ENCODE measurements at regions of chr3 and their contacts with region 1.

Region 1: GRCh38 chr3:127590593-127591477 is at the start of gene TPRA1:
- DNase-seq: peak; percentile 92 to 96 (median 95)
- H3K4me3 ChIP-seq: peak within 1 kb of the TSS; percentile 65 to 87 (median 87)
- H3K4me3 Mint-ChIP-seq: peak within 1 kb of the TSS; percentile 89 to 97
- H3K27ac ChIP-seq: peak within 1 kb of the TSS; percentile 99
- H3K27ac Mint-ChIP-seq: peak within 1 kb of the TSS; percentile 98 to 100 (median 99)
- H3K4me1 ChIP-seq: peaks cover 37 to 42% of the 10 kb centered on the region in 2 donors
- H3K4me1 Mint-ChIP-seq: peaks cover 47% of the 10 kb centered on the region
- H3K27me3 ChIP-seq: no peaks in the 10 kb centered on the region
- H3K27me3 Mint-ChIP-seq: peaks cover 0 to 8% (median 0%) of the 10 kb centered on the region in 3 donors
- CTCF ChIP-seq: peak; percentile 47
- polyA plus RNA-seq, gene TPRA1: 20.2 to 29.4 (median 23.4) TPM

Region 2: GRCh38 chr3:127629467-127630403 is 38.9 kb after region 1 on chr3:
- intact Hi-C with region 1: loop called in 1 of 2 experiments (anchors 10 kb)
- DNase-seq: peak; percentile 35 to 72 (median 37)
- H3K4me3 ChIP-seq: peak overlapping the region; percentile 21 to 72 (median 26)
- H3K4me3 Mint-ChIP-seq: peak overlapping the region; percentile 82 to 92
- H3K27ac ChIP-seq: no peak overlapping the region
- H3K27ac Mint-ChIP-seq: peak overlapping the region in 2 of 7 donors; percentile 30 to 70
- H3K4me1 ChIP-seq: peaks cover 11 to 13% of the 10 kb centered on the region in 2 donors
- H3K4me1 Mint-ChIP-seq: peaks cover 15% of the 10 kb centered on the region
- H3K27me3 ChIP-seq: peaks cover 32 to 48% of the 10 kb centered on the region in 2 donors
- H3K27me3 Mint-ChIP-seq: peaks cover 55 to 60% (median 57%) of the 10 kb centered on the region in 3 donors
- CTCF ChIP-seq: no peak

Region 3: GRCh38 chr3:127672516-127673190 is 81.8 kb after region 1 on chr3 and contains the start of gene ABTB1:
- intact Hi-C with region 1: loop called (anchors 5 kb)
- DNase-seq: peak; percentile 74 to 80 (median 76)
- H3K4me3 ChIP-seq: peak within 1 kb of the TSS; percentile 65 to 91 (median 69)
- H3K4me3 Mint-ChIP-seq: peak within 1 kb of the TSS; percentile 86 to 93
- H3K27ac ChIP-seq: peak within 1 kb of the TSS; percentile 38 to 96
- H3K27ac Mint-ChIP-seq: peak within 1 kb of the TSS; percentile 79 to 94 (median 89)
- H3K4me1 ChIP-seq: peaks cover 33 to 47% of the 10 kb centered on the region in 2 donors
- H3K4me1 Mint-ChIP-seq: peaks cover 47% of the 10 kb centered on the region
- H3K27me3 ChIP-seq: no peaks in the 10 kb centered on the region
- H3K27me3 Mint-ChIP-seq: peaks cover 1 to 3% (median 1%) of the 10 kb centered on the region in 3 donors
- CTCF ChIP-seq: no peak
- polyA plus RNA-seq, gene ABTB1: 107 to 246 (median 118) TPM

Region 4: GRCh38 chr3:127679285-127680145 is 88.7 kb after region 1 on chr3:
- intact Hi-C with region 1: loop called (anchors 5 kb)
- DNase-seq: no peak
- H3K4me3 ChIP-seq: peak overlapping the region in 1 of 3 experiments; percentile 3
- H3K4me3 Mint-ChIP-seq: no peak overlapping the region
- H3K27ac ChIP-seq: no peak overlapping the region
- H3K27ac Mint-ChIP-seq: peak overlapping the region in 3 of 7 donors; percentile 67 to 85 (median 73)
- H3K4me1 ChIP-seq: peaks cover 48 to 67% of the 10 kb centered on the region in 2 donors
- H3K4me1 Mint-ChIP-seq: peaks cover 79% of the 10 kb centered on the region
- H3K27me3 ChIP-seq: no peaks in the 10 kb centered on the region
- H3K27me3 Mint-ChIP-seq: peaks cover 0 to 3% (median 2%) of the 10 kb centered on the region in 3 donors
- CTCF ChIP-seq: no peak

Region 5: GRCh38 chr3:127729556-127730056 is 138.8 kb after region 1 on chr3:
- intact Hi-C with region 1: loop called in 1 of 2 experiments (anchors 2 kb)
- DNase-seq: peak; percentile 89 to 96 (median 95)
- H3K4me3 ChIP-seq: peak overlapping the region in 1 of 3 experiments; percentile 38
- H3K4me3 Mint-ChIP-seq: peak overlapping the region; percentile 6 to 39
- H3K27ac ChIP-seq: peak overlapping the region; percentile 80 to 83
- H3K27ac Mint-ChIP-seq: peak overlapping the region; percentile 90 to 99 (median 93)
- H3K4me1 ChIP-seq: peaks cover 52 to 54% of the 10 kb centered on the region in 2 donors
- H3K4me1 Mint-ChIP-seq: peaks cover 57% of the 10 kb centered on the region
- H3K27me3 ChIP-seq: no peaks in the 10 kb centered on the region
- H3K27me3 Mint-ChIP-seq: peaks cover 0 to 2% (median 2%) of the 10 kb centered on the region in 3 donors
- CTCF ChIP-seq: no peak

Region 6: GRCh38 chr3:127775398-127776109 is 184.7 kb after region 1 on chr3:
- intact Hi-C with region 1: loop called in 1 of 2 experiments (anchors 2 kb)
- DNase-seq: peak in 2 of 3 donors; percentile 38 to 95
- H3K4me3 ChIP-seq: peak overlapping the region in 1 of 3 experiments; percentile 24
- H3K4me3 Mint-ChIP-seq: peak overlapping the region; percentile 59 to 71
- H3K27ac ChIP-seq: peak overlapping the region in 1 of 2 donors; percentile 57
- H3K27ac Mint-ChIP-seq: peak overlapping the region; percentile 13 to 86 (median 69)
- H3K4me1 ChIP-seq: peaks cover 77 to 86% of the 10 kb centered on the region in 2 donors
- H3K4me1 Mint-ChIP-seq: peaks cover 84% of the 10 kb centered on the region
- H3K27me3 ChIP-seq: no peaks in the 10 kb centered on the region
- H3K27me3 Mint-ChIP-seq: peaks cover 0 to 7% (median 0%) of the 10 kb centered on the region in 3 donors
- CTCF ChIP-seq: no peak

Region 7: DNA sequence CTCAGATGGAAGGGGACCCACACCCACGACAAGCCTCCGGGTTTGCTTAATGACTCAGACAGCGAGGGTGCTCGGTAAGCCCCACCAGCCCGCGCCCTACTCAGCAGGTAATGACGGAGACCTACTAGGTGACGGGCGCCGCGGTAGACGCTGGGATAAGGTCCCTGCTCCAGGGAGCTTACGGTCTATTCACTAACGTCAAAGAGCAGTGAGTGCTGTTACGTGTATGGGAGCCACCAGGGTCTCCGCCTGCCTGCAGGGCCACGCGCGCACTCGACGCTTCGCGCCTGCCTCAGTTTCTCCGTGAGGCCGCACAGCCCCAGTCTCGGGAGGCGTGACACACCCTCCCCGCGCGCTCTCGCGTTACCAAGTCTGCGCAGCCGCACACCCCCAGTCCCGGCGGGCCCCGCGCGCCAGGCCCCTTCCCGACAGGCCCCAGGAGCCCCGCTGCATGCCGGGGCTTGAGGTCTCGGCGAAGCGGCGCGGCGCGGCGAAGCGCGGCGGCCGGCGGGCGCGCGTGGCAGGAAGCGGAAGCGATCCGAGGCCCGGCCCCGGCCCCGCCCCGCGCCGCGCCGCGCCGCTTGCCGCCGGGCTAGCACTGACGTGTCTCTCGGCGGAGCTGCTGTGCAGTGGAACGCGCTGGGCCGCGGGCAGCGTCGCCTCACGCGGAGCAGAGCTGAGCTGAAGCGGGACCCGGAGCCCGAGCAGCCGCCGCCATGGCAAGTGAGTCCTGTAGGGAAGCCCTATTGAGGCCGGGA is 461.2 kb after region 1 on chr3 and contains the start of gene SEC61A1:
- intact Hi-C with region 1: loop called in 1 of 2 experiments (anchors 10 kb)
- DNase-seq: peak; percentile 90 to 92 (median 90)
- H3K4me3 ChIP-seq: peak within 1 kb of the TSS; percentile 82 to 97 (median 86)
- H3K4me3 Mint-ChIP-seq: peak within 1 kb of the TSS; percentile 91 to 96
- H3K27ac ChIP-seq: peak within 1 kb of the TSS; percentile 85 to 89
- H3K27ac Mint-ChIP-seq: peak within 1 kb of the TSS; percentile 91 to 98 (median 94)
- H3K4me1 ChIP-seq: peaks cover 28 to 36% of the 10 kb centered on the region in 2 donors
- H3K4me1 Mint-ChIP-seq: peaks cover 40% of the 10 kb centered on the region
- H3K27me3 ChIP-seq: peaks cover 0 to 2% of the 10 kb centered on the region in 2 donors
- H3K27me3 Mint-ChIP-seq: peaks cover 3 to 9% (median 7%) of the 10 kb centered on the region in 3 donors
- CTCF ChIP-seq: no peak
- polyA plus RNA-seq, gene SEC61A1: 62.8 to 136 (median 114) TPM

Measured in CD14-positive monocyte (primary cell).